A549 (cell line): ENCODE measurements at regions of chr2 and their contacts with region 1.

Region 1: DNA sequence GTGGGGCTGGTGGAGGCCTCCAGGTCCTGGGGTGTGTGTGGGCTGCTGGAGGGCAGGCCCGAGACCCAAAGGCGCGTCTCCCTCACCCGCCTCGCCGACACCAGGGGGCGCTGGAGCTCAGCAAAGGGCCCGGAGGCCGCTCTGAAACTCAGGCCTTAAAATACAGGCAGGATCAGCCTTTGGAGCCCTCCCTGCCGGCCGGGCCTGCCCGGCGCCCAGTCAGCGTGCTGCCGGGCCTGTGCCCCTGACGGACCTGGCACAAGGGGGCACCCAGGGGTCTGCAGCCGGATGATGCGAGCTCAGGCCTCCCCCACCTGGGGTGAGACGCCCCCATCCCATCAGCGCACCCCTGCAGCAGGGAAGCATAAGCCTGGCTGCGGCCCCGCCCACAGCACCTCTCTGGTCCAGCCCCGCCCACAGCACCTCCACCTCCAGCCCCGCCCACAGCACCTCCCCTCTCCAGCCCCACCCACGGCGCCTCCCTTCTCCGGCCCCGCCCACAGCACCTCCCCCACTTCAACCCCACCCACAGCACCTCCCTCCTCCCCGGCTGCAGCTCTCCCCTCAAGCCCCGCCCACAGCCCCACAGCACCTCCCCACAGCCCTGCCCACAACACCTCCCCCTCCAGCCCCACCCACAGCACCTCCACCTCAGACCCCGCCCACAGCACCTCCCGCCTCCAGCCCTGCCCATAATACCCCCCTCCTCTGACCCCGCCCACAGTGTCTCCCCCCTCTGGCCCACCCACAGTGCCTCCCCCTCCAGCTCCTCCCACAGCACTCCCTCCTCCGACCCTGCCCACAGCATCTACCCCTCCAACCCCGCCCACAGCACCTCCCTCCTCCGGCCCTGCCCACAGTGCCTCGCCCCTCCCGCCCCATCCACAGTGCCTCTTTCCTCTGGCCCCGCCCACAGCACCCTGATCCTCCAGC is 92.8 kb upstream of the OTOS start:
- DNase-seq: peak; percentile 90 to 95
- ATAC-seq: peak; percentile 80 to 90
- H3K4me3 ChIP-seq: peak overlapping the region; percentile 59
- H3K27ac ChIP-seq: peak overlapping the region; percentile 83 to 88
- H3K4me1 ChIP-seq: peaks cover 16% of the 10 kb centered on the region
- CTCF ChIP-seq: peak; percentile 88
- EP300 ChIP-seq: no peak
- POLR2A ChIP-seq: no peak
- RAD21 ChIP-seq: peak; percentile 94 to 98

Region 2: GRCh38 chr2:240149943-240150784 is 83.1 kb before region 1 on chr2:
- CTCF ChIA-PET with region 1: interaction called, 12 read pairs
- POLR2A ChIA-PET with region 1: no interaction called
- DNase-seq: peak; percentile 47 to 71
- ATAC-seq: peak; percentile 65 to 86
- H3K4me3 ChIP-seq: no peak overlapping the region
- H3K27ac ChIP-seq: no peak overlapping the region
- H3K4me1 ChIP-seq: no peaks in the 10 kb centered on the region
- CTCF ChIP-seq: peak; percentile 69
- EP300 ChIP-seq: no peak
- POLR2A ChIP-seq: no peak
- RAD21 ChIP-seq: peak; percentile 73 to 75

Region 3: GRCh38 chr2:240217431-240218239 is 15.6 kb before region 1 on chr2:
- CTCF ChIA-PET with region 1: interaction called, 17 read pairs
- POLR2A ChIA-PET with region 1: no interaction called
- DNase-seq: peak; percentile 33
- ATAC-seq: peak; percentile 31 to 74; a peak in 4 of 6 replicates
- H3K4me3 ChIP-seq: no peak overlapping the region
- H3K27ac ChIP-seq: no peak overlapping the region
- H3K4me1 ChIP-seq: peaks cover 11% of the 10 kb centered on the region; the same call in 2 of the 3 replicates
- CTCF ChIP-seq: no peak
- EP300 ChIP-seq: no peak
- POLR2A ChIP-seq: no peak
- RAD21 ChIP-seq: no peak

Region 4: GRCh38 chr2:240255811-240256703 is 22.8 kb after region 1 on chr2:
- CTCF ChIA-PET with region 1: interaction called, 10 read pairs
- POLR2A ChIA-PET with region 1: no interaction called
- DNase-seq: peak in 1 of 2 experiments; percentile 50
- ATAC-seq: no peak
- H3K4me3 ChIP-seq: no peak overlapping the region
- H3K27ac ChIP-seq: peak overlapping the region; percentile 65 to 68; a peak in 4 of 6 replicates
- H3K4me1 ChIP-seq: peaks cover 30% of the 10 kb centered on the region
- CTCF ChIP-seq: no peak
- EP300 ChIP-seq: no peak
- POLR2A ChIP-seq: no peak
- RAD21 ChIP-seq: no peak

Region 5: DNA sequence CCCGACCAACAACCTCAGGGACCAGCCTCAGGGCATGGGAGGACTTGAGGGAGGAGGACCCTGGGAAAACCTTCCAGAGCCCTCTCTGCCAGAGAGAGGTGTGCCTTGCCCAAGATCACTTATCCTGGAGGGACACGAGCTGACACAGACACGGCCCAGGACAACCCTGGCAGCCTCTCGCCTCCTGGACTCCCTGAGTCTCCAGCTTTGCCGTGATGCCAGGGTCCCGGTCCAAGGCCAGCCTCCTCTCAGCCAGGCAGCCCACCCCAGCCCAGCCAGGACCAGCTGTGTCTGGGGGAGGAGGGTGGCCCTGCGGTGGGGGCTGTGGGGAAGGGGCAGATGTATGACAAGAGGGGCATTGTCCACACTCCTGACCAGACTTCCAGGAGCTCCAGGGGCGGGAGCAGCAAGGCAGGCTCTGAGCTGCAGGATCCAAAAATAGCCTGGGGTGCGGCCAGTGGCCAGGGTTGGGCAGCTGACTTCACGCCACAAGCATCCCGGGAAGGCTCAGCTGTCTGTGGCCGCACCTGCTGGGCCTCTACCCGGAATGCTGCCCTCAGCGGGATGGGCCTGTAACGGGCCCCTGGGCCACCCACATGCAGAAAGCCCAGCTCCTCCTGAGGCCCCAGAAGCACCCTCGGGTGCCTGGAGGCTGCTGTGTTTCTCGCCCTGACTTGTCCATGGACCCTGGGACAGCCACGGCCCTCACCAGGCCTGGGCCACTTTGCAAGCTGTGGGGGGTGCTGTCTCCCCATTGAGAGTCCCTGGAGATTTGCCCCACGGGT is 136.8 kb after region 1 on chr2:
- CTCF ChIA-PET with region 1: interaction called, 31 read pairs
- POLR2A ChIA-PET with region 1: interaction called, 3 read pairs
- DNase-seq: peak; percentile 95
- ATAC-seq: peak; percentile 77 to 84
- H3K4me3 ChIP-seq: no peak overlapping the region
- H3K27ac ChIP-seq: peak overlapping the region; percentile 92 to 97
- H3K4me1 ChIP-seq: peaks cover 68% of the 10 kb centered on the region
- CTCF ChIP-seq: peak; percentile 12; the same call in 1 of the 3 replicates
- EP300 ChIP-seq: peak; percentile 43 to 69; a peak in 2 of 5 replicates
- POLR2A ChIP-seq: peak; percentile 8; the same call in 1 of the 2 replicates
- RAD21 ChIP-seq: peak in 1 of 2 experiments; percentile 40; a peak in 2 of 5 replicates

Region 6: DNA sequence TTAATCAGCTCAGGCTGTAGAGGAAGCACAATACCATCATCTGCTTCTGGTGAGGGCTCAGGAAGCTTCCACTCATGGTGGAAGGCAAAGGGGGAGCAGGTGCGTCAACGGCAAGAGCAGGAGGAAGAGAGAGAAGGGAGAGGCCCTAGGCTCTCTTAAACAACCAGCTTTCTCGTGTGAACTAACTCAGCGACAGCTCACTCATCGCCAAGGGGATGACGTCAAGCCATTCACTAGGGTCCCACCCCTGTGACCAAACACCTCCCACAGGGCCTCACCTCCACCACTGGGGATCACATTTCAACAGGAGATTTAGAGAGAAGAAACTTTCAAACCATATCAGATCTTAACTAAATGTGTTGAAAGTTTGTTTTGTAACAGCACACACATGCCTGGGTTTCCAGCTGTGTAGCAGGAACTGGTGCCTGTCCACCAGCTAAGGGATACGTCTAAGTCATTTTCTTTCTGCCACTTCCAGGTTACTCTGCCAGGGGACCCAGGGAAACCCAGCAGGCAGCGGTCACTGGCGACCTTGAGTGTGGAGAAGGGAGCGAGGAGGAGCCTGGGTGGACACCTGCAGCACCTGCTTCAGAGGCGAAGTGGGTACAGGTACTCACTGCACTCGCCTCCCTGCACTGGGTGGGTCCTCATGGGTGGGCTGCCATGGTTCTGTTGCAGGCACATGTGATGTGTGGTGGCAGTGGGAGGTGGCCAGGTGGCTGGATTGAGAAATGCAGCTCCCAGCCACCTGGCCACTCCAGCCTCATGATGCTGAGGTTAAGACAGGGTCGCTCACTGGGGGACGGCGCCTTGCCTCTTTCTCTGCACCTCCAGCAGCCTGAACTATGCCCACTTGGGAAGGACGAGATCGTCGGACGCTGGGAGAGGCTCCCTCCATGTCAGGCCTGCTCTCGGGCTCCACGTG is 193.8 kb after region 1 on chr2:
- CTCF ChIA-PET with region 1: interaction called, 18 read pairs
- POLR2A ChIA-PET with region 1: no interaction called
- DNase-seq: peak in 1 of 2 experiments; percentile 66
- ATAC-seq: peak; percentile 39 to 52; a peak in 5 of 6 replicates
- H3K4me3 ChIP-seq: no peak overlapping the region
- H3K27ac ChIP-seq: peak overlapping the region in 1 of 2 experiments; percentile 34; a peak in 1 of 6 replicates
- H3K4me1 ChIP-seq: peaks cover 19% of the 10 kb centered on the region; the same call in 2 of the 3 replicates
- CTCF ChIP-seq: no peak
- EP300 ChIP-seq: no peak
- POLR2A ChIP-seq: 0 out of 2 replicates have a peak, but pooled peaks have one; percentile 14
- RAD21 ChIP-seq: no peak

Region 7: GRCh38 chr2:240449764-240450531 is 216.7 kb after region 1 on chr2:
- CTCF ChIA-PET with region 1: interaction called, 26 read pairs
- POLR2A ChIA-PET with region 1: no interaction called
- DNase-seq: peak in 1 of 2 experiments; percentile 50
- ATAC-seq: peak; percentile 2 to 38; a peak in 4 of 6 replicates
- H3K4me3 ChIP-seq: no peak overlapping the region
- H3K27ac ChIP-seq: peak overlapping the region in 1 of 2 experiments; percentile 92; a peak in 3 of 6 replicates
- H3K4me1 ChIP-seq: peaks cover 50% of the 10 kb centered on the region
- CTCF ChIP-seq: no peak
- EP300 ChIP-seq: no peak
- POLR2A ChIP-seq: no peak
- RAD21 ChIP-seq: no peak